ENCODE measurements at regions of chr4 and their contacts with region 1.

Region 1: GRCh38 chr4:185039508-185040273 is 21.4 kb downstream of the HELT start:
- DNase-seq: peak; percentile 74
- H3K4me3 ChIP-seq: peak overlapping the region in 1 of 2 experiments; percentile 12; a peak in 2 of 4 replicates
- H3K27ac ChIP-seq: no peak overlapping the region
- H3K4me1 ChIP-seq: peaks cover 0 to 2% of the 10 kb centered on the region in 2 experiments; a peak in 1 of 4 replicates
- H3K27me3 ChIP-seq: no peaks in the 10 kb centered on the region; the same call in 1 of the 2 replicates
- CTCF ChIP-seq: peak; percentile 92
- EP300 ChIP-seq: no peak
- RAD21 ChIP-seq: peak; percentile 89

Region 2: DNA sequence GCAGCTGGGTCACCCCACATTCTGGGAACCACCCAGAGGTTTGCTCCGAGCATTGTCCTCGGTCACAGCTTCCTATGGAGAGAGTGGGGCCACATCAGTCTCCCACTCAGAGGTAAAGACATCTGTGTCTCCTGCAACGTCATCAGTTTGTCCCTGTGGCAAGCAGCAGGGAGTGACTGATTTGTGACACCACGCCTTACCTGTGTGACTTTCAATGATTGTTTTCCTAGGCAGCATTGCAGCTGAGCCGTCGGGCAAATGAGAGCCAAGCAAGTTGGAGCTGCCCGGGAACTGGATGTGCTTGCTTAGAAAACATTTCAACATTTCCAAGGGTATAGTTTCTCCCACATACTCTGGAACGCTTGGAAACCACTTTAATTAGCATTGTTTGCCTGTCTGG is 51.1 kb before region 1 on chr4:
- CTCF ChIA-PET with region 1: no interaction called
- POLR2A ChIA-PET with region 1: no interaction called
- DNase-seq: no peak
- H3K4me3 ChIP-seq: no peak overlapping the region
- H3K27ac ChIP-seq: no peak overlapping the region
- H3K4me1 ChIP-seq: peaks cover 0 to 2% of the 10 kb centered on the region in 2 experiments; a peak in 1 of 4 replicates
- H3K27me3 ChIP-seq: peaks cover 1% of the 10 kb centered on the region; the same call in 1 of the 2 replicates
- CTCF ChIP-seq: no peak
- EP300 ChIP-seq: no peak
- RAD21 ChIP-seq: no peak

Region 3: DNA sequence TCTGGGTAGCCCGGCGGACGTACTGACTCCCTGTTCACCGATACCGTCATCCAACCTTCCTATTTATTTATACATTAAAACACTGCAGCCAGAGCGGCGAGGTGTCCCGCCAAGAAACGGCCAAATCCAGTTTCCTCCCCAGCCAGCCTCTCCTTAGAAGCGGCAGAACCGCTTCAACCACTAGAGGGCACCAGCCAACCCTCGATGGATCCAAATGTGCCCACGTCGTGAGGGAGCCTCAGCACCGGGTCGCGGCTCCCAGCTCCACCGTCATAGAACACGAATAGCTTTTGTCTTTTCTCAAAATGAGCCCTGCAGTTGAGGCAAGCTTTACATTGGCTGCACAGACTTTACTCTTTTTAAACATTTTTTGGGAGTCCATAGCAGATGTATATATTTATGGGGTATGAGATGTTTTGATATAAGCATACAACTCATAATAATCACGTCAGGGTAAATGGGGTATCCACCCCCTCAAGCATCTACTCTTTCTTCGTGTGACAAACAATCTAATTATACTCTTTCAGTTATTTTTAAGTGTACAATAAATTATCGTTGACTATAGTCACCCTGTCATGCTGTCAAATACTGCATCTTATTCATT is 34.4 kb before region 1 on chr4:
- CTCF ChIA-PET with region 1: interaction called, 10 read pairs
- POLR2A ChIA-PET with region 1: no interaction called
- DNase-seq: peak; percentile 89
- H3K4me3 ChIP-seq: peak overlapping the region; percentile 4 to 35; a peak in 2 of 4 replicates
- H3K27ac ChIP-seq: no peak overlapping the region
- H3K4me1 ChIP-seq: peaks cover 0 to 5% of the 10 kb centered on the region in 2 experiments; a peak in 1 of 4 replicates
- H3K27me3 ChIP-seq: peaks cover 10% of the 10 kb centered on the region; the same call in 1 of the 2 replicates
- CTCF ChIP-seq: peak; percentile 92
- EP300 ChIP-seq: no peak
- RAD21 ChIP-seq: peak; percentile 82

Region 4: DNA sequence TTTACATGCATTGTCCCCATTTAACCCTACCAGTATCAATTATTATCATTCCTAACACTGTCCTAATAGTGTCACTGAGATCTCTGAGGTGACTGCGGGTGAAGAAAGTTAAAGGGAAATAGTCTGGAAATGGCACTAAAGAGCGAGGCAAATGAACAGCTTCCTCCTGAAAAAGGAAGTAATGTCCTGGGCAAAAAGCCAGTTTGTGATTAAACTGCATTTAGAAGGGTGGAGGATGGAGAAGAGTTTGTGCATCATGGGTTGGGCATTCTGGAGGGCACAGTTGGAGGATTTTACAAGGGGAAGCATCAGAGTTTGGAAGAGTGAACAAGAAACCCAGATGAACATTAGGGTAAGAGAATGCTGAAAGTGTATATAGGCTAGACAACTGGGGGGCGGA is 42.9 kb after region 1 on chr4:
- CTCF ChIA-PET with region 1: interaction called, 15 read pairs
- POLR2A ChIA-PET with region 1: no interaction called
- DNase-seq: no peak
- H3K4me3 ChIP-seq: no peak overlapping the region
- H3K27ac ChIP-seq: no peak overlapping the region
- H3K4me1 ChIP-seq: no peaks in the 10 kb centered on the region
- H3K27me3 ChIP-seq: peaks cover 11% of the 10 kb centered on the region; the same call in 1 of the 2 replicates
- CTCF ChIP-seq: no peak
- EP300 ChIP-seq: no peak
- RAD21 ChIP-seq: no peak

Region 5: DNA sequence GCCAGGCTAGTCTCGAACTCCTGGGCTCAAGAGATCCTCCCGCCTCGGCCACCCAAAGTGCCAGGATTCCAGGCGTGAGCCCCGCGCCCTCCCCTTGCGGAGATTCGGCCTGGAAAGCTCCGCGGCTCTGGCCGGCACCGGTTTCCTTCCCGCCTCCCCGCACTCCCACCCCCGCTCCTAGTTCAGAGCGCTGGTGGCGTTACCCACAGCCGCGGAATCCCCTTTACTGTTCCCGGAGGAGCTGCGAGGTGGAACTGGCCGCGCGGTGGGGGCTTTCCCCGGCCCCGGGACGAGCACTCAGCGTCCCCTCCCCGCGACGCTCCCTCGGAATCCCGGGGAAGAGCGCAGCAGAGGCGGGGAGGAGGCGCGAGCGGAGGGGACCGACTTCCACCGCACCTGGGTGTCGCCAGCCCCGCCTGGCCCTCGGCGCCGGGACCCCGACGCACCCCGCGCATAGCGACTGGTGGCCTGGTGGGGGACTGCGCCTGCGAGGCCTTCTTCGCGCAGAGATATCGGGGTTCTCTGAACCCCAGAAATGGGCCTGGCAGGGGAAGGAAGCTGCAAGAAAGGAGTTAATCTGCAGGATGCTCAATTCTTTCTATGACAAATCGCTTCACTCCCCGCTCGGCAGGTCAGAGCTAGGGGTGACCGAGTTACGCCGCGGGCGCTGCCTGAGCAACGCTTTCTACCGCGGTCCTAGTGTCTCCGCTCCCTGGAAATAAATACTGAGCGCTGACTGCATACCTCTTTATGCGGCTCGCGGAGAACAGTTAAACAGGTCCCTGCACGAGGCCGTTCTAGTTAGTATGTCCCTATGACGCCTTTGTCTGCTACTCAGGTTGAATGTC is 88.8 kb after region 1 on chr4:
- CTCF ChIA-PET with region 1: interaction called, 105 read pairs
- POLR2A ChIA-PET with region 1: no interaction called
- DNase-seq: peak; percentile 83
- H3K4me3 ChIP-seq: peak overlapping the region; percentile 55 to 66
- H3K27ac ChIP-seq: no peak overlapping the region
- H3K4me1 ChIP-seq: peaks cover 0 to 7% of the 10 kb centered on the region in 2 experiments; a peak in 1 of 4 replicates
- H3K27me3 ChIP-seq: no peaks in the 10 kb centered on the region
- CTCF ChIP-seq: no peak
- EP300 ChIP-seq: no peak
- RAD21 ChIP-seq: no peak

Region 6: GRCh38 chr4:185134307-185134869 is 94.7 kb after region 1 on chr4:
- CTCF ChIA-PET with region 1: interaction called, 105 read pairs
- POLR2A ChIA-PET with region 1: no interaction called
- DNase-seq: peak; percentile 68
- H3K4me3 ChIP-seq: no peak overlapping the region; a peak in 1 of 4 replicates
- H3K27ac ChIP-seq: no peak overlapping the region
- H3K4me1 ChIP-seq: no peaks in the 10 kb centered on the region
- H3K27me3 ChIP-seq: no peaks in the 10 kb centered on the region
- CTCF ChIP-seq: peak; percentile 91
- EP300 ChIP-seq: no peak
- RAD21 ChIP-seq: peak; percentile 89

Region 7: DNA sequence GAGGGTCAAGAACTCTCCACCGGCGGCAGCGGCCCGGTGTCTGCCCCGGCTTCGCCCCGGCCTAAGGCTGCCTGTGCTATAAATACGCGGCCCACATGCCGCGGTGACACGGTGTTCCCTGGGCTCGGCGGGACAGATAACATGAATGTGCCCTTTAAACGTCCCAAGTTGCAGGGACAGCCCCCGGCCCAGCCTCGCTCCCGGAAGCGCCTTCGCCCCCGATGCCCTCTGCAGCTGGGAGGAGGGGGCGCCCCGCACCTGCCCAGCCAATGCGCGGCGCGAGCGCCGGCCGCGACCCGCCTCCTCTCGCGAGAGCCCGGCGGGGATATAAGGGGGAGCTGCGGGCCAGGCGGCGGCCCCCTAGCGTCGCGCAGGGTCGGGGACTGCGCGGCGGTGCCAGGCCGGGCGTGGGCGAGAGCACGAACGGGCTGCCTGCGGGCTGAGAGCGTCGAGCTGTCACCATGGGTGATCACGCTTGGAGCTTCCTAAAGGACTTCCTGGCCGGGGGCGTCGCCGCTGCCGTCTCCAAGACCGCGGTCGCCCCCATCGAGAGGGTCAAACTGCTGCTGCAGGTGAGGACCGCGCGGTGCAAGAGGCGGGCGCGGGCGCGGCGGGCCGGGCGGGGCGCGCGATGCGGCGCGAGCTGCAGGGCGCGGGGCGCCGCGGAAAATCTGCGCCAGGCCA is 103.4 kb after region 1 on chr4 and contains the start of gene SLC25A4:
- CTCF ChIA-PET with region 1: interaction called, 105 read pairs
- POLR2A ChIA-PET with region 1: no interaction called
- DNase-seq: peak; percentile 99
- H3K4me3 ChIP-seq: peak within 1 kb of the TSS; percentile 72 to 88
- H3K27ac ChIP-seq: peak within 1 kb of the TSS in 1 of 2 experiments; percentile 83; a peak in 2 of 4 replicates
- H3K4me1 ChIP-seq: peaks cover 0 to 23% of the 10 kb centered on the region in 2 experiments; a peak in 2 of 4 replicates
- H3K27me3 ChIP-seq: no peaks in the 10 kb centered on the region
- CTCF ChIP-seq: peak; percentile 51
- EP300 ChIP-seq: no peak
- RAD21 ChIP-seq: no peak
- polyA plus RNA-seq, gene SLC25A4: 36.2 and 40.5 TPM in 2 replicates

Region 8: GRCh38 chr4:186037692-186038658 is 998.3 kb after region 1 on chr4:
- CTCF ChIA-PET with region 1: interaction called, 12 read pairs
- POLR2A ChIA-PET with region 1: no interaction called
- DNase-seq: peak; percentile 61
- H3K4me3 ChIP-seq: no peak overlapping the region
- H3K27ac ChIP-seq: no peak overlapping the region
- H3K4me1 ChIP-seq: peaks cover 0 to 5% of the 10 kb centered on the region in 2 experiments; a peak in 1 of 4 replicates
- H3K27me3 ChIP-seq: no peaks in the 10 kb centered on the region
- CTCF ChIP-seq: peak; percentile 80
- EP300 ChIP-seq: no peak
- RAD21 ChIP-seq: peak; percentile 91

Measured in SK-N-SH (cell line).